ENCODE measurements at regions of chr2 and their contacts with region 1.

Region 1: GRCh38 chr2:173716461-173717052 is 248.6 kb downstream of the SP3 start:
- DNase-seq: peak; percentile 97
- ATAC-seq: peak; percentile 81
- H3K4me3 ChIP-seq: 0 out of 2 replicates have a peak overlapping the region, but pooled peaks have one; percentile 8
- H3K27ac ChIP-seq: peak overlapping the region; percentile 96
- H3K4me1 ChIP-seq: peaks cover 43% of the 10 kb centered on the region
- H3K27me3 ChIP-seq: no peaks in the 10 kb centered on the region
- CTCF ChIP-seq: peak; percentile 42

Region 2: GRCh38 chr2:173590271-173590861 is 126.2 kb before region 1 on chr2:
- CTCF ChIA-PET with region 1: no interaction called
- POLR2A ChIA-PET with region 1: no interaction called
- intact Hi-C with region 1: loop called (anchors 1 kb)
- DNase-seq: peak; percentile 98
- ATAC-seq: peak; percentile 86
- H3K4me3 ChIP-seq: peak overlapping the region; percentile 59
- H3K27ac ChIP-seq: peak overlapping the region; percentile 98
- H3K4me1 ChIP-seq: peaks cover 36% of the 10 kb centered on the region
- H3K27me3 ChIP-seq: no peaks in the 10 kb centered on the region
- CTCF ChIP-seq: no peak

Region 3: GRCh38 chr2:173652767-173653431 is 63.7 kb before region 1 on chr2:
- CTCF ChIA-PET with region 1: no interaction called
- POLR2A ChIA-PET with region 1: no interaction called
- intact Hi-C with region 1: loop called (anchors 1 kb)
- DNase-seq: peak; percentile 99
- ATAC-seq: peak; percentile 99
- H3K4me3 ChIP-seq: peak overlapping the region; percentile 50
- H3K27ac ChIP-seq: peak overlapping the region; percentile 97
- H3K4me1 ChIP-seq: peaks cover 27% of the 10 kb centered on the region
- H3K27me3 ChIP-seq: no peaks in the 10 kb centered on the region
- CTCF ChIP-seq: no peak

Region 4: GRCh38 chr2:173657996-173658717 is 58.4 kb before region 1 on chr2:
- CTCF ChIA-PET with region 1: no interaction called
- POLR2A ChIA-PET with region 1: interaction called, 4 read pairs
- intact Hi-C with region 1: loop called (anchors 1 kb)
- DNase-seq: peak; percentile 94
- ATAC-seq: peak; percentile 99
- H3K4me3 ChIP-seq: no peak overlapping the region
- H3K27ac ChIP-seq: peak overlapping the region; percentile 87
- H3K4me1 ChIP-seq: peaks cover 35% of the 10 kb centered on the region
- H3K27me3 ChIP-seq: no peaks in the 10 kb centered on the region
- CTCF ChIP-seq: no peak

Region 5: GRCh38 chr2:173667417-173667816 is 49.1 kb before region 1 on chr2:
- CTCF ChIA-PET with region 1: no interaction called
- POLR2A ChIA-PET with region 1: no interaction called
- intact Hi-C with region 1: loop called (anchors 1 kb)
- DNase-seq: peak; percentile 39
- ATAC-seq: peak; percentile 67
- H3K4me3 ChIP-seq: no peak overlapping the region
- H3K27ac ChIP-seq: no peak overlapping the region
- H3K4me1 ChIP-seq: peaks cover 13% of the 10 kb centered on the region
- H3K27me3 ChIP-seq: no peaks in the 10 kb centered on the region
- CTCF ChIP-seq: peak; percentile 57

Measured in PC-3 (cell line).